ENCODE measurements at regions of chr12 and their contacts with region 1.

Region 1: GRCh38 chr12:67647799-67648520 is 585 bp upstream of the DYRK2 start:
- DNase-seq: peak; percentile 17
- H3K4me3 Mint-ChIP-seq: peak overlapping the region; percentile 83
- H3K27ac Mint-ChIP-seq: peak overlapping the region; percentile 89
- H3K4me1 Mint-ChIP-seq: peaks cover 36% of the 10 kb centered on the region
- H3K27me3 Mint-ChIP-seq: peaks cover 3% of the 10 kb centered on the region

Region 2: DNA sequence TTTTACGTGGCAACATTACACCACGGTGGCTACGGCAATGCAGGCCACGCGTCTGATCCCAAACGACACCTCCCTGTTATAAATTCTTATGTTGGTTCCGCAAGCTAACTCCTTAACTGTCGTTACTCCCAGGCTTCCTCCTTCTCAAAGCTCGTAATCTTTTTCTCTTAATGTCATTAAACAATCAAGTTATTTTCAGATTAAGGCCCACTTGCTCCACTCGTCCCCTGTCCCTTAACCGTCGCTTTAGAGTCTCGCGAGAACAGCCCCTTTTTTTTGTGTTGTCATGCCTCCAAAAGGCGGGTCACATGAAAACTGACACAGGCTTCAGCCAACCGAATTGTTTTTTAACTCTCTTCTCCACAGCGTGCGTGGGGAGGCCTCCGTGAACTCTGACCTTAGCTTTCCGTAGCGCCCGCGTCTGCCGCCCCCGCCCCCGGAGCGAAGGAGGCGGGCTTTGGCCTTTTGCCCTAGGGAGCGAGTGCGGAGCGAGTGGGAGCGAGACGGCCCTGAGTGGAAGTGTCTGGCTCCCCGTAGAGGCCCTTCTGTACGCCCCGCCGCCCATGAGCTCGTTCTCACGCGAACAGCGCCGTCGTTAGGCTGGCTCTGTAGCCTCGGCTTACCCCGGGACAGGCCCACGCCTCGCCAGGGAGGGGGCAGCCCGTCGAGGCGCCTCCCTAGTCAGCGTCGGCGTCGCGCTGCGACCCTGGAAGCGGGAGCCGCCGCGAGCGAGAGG is 378.9 kb before region 1 on chr12 and contains the start of gene CAND1:
- intact Hi-C with region 1: loop called (anchors 2 kb)
- DNase-seq: peak; percentile 94
- H3K4me3 Mint-ChIP-seq: peak within 1 kb of the TSS; percentile 92
- H3K27ac Mint-ChIP-seq: peak within 1 kb of the TSS; percentile 99
- H3K4me1 Mint-ChIP-seq: peaks cover 39% of the 10 kb centered on the region
- H3K27me3 Mint-ChIP-seq: no peaks in the 10 kb centered on the region
- total RNA-seq, gene CAND1: 185 and 209 TPM in 2 replicates

Region 3: GRCh38 chr12:67578976-67579661 is 68.8 kb before region 1 on chr12:
- intact Hi-C with region 1: loop called (anchors 2 kb)
- DNase-seq: peak; percentile 11
- H3K4me3 Mint-ChIP-seq: peak overlapping the region; percentile 30
- H3K27ac Mint-ChIP-seq: peak overlapping the region; percentile 56
- H3K4me1 Mint-ChIP-seq: peaks cover 30% of the 10 kb centered on the region
- H3K27me3 Mint-ChIP-seq: peaks cover 12% of the 10 kb centered on the region

Region 4: GRCh38 chr12:67630373-67631088 is 17.4 kb before region 1 on chr12:
- intact Hi-C with region 1: loop called (anchors 1 kb)
- DNase-seq: peak; percentile 81
- H3K4me3 Mint-ChIP-seq: peak overlapping the region; percentile 37
- H3K27ac Mint-ChIP-seq: peak overlapping the region; percentile 89
- H3K4me1 Mint-ChIP-seq: peaks cover 62% of the 10 kb centered on the region
- H3K27me3 Mint-ChIP-seq: no peaks in the 10 kb centered on the region

Region 5: DNA sequence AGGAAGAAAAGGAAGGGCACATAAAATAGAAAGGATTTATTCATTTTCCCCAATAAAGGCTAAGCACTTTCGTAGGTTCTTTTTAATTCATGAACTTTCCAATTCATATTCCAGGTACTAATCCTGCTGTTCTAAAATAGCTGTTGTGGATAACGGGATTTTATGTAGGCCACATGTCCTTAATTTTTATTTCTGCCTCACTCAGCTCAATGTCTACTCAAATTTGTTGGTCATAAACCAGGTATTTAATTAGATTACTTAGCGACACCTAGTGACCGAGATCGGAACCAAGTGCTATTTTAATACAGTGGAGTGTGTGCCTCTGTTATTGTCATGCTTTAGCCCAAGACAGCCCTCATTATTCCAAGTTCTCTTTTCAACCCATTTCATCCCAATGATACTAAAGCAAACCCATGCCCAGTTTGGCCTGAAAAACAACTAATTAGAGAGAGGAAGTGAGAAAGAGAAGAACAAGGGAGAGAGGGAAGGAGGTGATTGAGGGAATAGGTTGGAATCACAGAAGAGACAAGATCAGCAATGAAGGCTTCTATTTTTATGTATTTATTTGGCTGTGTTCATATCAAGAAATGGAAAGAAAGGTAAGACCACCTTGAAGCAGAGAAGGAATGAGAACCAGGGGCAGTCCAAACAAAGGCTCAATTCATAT is 295.4 kb after region 1 on chr12:
- intact Hi-C with region 1: loop called (anchors 1 kb)
- DNase-seq: peak; percentile 27
- H3K4me3 Mint-ChIP-seq: no peak overlapping the region
- H3K27ac Mint-ChIP-seq: no peak overlapping the region
- H3K4me1 Mint-ChIP-seq: peaks cover 5% of the 10 kb centered on the region
- H3K27me3 Mint-ChIP-seq: peaks cover 6% of the 10 kb centered on the region